Ascending aorta (tissue), 2 donors: ENCODE measurements at regions of chr20 and their contacts with region 1.

Region 1: GRCh38 chr20:23655491-23656211 is 17.9 kb upstream of the CST3 start:
- DNase-seq: peak in 1 of 2 donors; percentile 77
- H3K4me3 ChIP-seq: peak overlapping the region in 1 of 2 donors; percentile 41
- H3K27ac ChIP-seq: peak overlapping the region; percentile 35 to 52
- H3K4me1 ChIP-seq: peaks cover 0 to 2% of the 10 kb centered on the region in 2 donors
- H3K27me3 ChIP-seq: no peaks in the 10 kb centered on the region
- CTCF ChIP-seq: no peak

Region 2: DNA sequence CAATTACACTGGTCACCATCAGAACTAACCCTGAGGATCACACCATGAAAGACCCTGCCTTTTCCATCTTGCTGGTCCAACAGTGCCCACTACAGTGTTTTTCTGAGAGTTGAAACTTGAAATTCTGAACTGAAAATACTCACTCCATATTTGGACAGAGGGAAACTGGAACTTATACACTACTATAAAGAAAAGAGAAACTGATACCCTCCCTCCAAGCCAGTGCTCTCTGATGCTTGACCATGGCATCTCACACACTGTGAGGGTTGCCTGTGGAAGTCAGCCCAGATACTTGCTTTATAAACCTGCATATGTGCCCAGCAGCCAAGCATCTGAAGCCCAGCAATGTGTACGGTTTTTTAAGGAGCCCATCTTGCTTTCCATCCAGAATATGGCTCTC is 1180.0 kb before region 1 on chr20:
- intact Hi-C with region 1: no loop called
- DNase-seq: no peak
- H3K4me3 ChIP-seq: no peak overlapping the region
- H3K27ac ChIP-seq: no peak overlapping the region
- H3K4me1 ChIP-seq: no peaks in the 10 kb centered on the region
- H3K27me3 ChIP-seq: no peaks in the 10 kb centered on the region
- CTCF ChIP-seq: no peak

Region 3: GRCh38 chr20:23606652-23607049 is 49.0 kb before region 1 on chr20:
- intact Hi-C with region 1: loop called (anchors 5 kb)
- DNase-seq: peak in 1 of 2 donors; percentile 90
- H3K4me3 ChIP-seq: no peak overlapping the region
- H3K27ac ChIP-seq: no peak overlapping the region
- H3K4me1 ChIP-seq: no peaks in the 10 kb centered on the region
- H3K27me3 ChIP-seq: no peaks in the 10 kb centered on the region
- CTCF ChIP-seq: peak; percentile 72 to 96 (median 91)

Region 4: DNA sequence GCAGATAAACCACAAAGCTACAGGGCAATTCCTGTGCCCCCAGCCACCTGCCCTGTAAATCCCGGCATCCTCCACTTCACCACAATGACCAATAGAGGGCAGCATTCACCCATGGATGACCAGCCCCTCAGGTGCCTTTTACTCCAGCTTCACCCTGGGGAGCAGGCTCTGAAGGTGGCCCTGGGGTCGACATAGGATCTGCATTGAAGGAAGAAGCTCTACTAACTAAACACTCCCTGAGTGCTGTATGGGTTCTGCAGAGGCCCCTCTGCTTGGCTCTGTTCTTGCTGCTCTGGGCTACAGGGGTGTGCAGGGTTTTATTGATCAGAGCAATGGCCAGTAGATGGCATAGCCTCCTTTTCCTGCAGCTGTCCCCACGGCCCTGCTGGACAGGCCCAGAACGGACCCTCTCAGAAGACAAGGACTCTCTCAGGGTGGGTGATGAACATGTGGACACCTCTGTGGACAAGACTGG is 12.9 kb after region 1 on chr20:
- intact Hi-C with region 1: no loop called
- DNase-seq: no peak
- H3K4me3 ChIP-seq: no peak overlapping the region
- H3K27ac ChIP-seq: no peak overlapping the region
- H3K4me1 ChIP-seq: no peaks in the 10 kb centered on the region
- H3K27me3 ChIP-seq: no peaks in the 10 kb centered on the region
- CTCF ChIP-seq: peak; percentile 56 to 82 (median 68)

Region 5: GRCh38 chr20:23680146-23680545 is 24.5 kb after region 1 on chr20:
- intact Hi-C with region 1: no loop called
- DNase-seq: peak in 1 of 2 donors; percentile 45
- H3K4me3 ChIP-seq: no peak overlapping the region
- H3K27ac ChIP-seq: no peak overlapping the region
- H3K4me1 ChIP-seq: no peaks in the 10 kb centered on the region
- H3K27me3 ChIP-seq: no peaks in the 10 kb centered on the region
- CTCF ChIP-seq: no peak

Region 6: DNA sequence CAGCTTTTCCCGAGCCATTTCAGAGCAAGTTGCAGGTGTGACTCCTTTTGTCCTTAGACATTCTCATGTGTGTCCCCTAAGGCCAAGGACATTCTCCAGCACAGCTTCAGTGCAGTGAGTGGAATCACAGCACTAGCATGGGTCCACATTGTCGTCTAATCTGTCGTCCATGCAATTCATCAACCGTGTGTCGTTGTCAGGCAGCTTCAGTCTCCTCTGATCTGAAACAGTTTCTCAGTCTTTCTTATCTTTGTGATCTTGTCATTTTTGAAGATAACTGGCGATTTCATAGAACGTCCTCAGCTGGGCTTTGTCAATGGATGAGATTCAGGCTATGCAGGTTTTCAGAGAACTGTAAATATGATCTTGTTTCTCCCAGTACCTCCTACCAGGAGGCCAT is 139.2 kb after region 1 on chr20:
- intact Hi-C with region 1: no loop called
- DNase-seq: no peak
- H3K4me3 ChIP-seq: no peak overlapping the region
- H3K27ac ChIP-seq: no peak overlapping the region
- H3K4me1 ChIP-seq: no peaks in the 10 kb centered on the region
- H3K27me3 ChIP-seq: no peaks in the 10 kb centered on the region
- CTCF ChIP-seq: no peak